Activated CD4-positive, alpha-beta T cell treated with anti-CD3 and anti-CD28 coated beads, Interleukin-2, amount 10 ng/mL, durations not matched to agents 24 days and 14 days (primary cell): ENCODE measurements at regions of chr11 and their contacts with region 1.

Region 1: DNA sequence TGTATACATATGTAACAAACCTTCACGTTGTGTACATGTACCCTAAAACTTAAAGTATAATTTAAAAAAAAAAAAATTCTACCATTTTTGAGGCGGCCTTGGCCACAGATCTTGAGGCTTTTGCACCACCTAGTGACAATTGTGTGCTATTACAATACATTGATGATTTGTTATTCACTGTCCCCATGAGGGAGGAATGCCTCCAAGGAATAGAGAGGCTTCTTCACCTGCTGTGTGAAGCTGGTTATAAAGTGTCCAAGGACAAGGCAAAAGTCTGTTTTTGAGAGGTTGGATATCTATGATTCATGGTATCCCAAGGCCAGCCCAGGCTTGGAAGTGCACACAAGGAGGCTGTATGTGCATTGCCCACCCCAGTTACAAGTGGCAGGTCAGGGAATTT is 30.7 kb downstream of the SLC22A25 start:
- DNase-seq: peak; percentile 68
- H3K4me3 Mint-ChIP-seq: no peak overlapping the region
- H3K27ac Mint-ChIP-seq: no peak overlapping the region
- H3K4me1 Mint-ChIP-seq: no peaks in the 10 kb centered on the region
- H3K27me3 Mint-ChIP-seq: peaks cover 9% of the 10 kb centered on the region

Region 2: DNA sequence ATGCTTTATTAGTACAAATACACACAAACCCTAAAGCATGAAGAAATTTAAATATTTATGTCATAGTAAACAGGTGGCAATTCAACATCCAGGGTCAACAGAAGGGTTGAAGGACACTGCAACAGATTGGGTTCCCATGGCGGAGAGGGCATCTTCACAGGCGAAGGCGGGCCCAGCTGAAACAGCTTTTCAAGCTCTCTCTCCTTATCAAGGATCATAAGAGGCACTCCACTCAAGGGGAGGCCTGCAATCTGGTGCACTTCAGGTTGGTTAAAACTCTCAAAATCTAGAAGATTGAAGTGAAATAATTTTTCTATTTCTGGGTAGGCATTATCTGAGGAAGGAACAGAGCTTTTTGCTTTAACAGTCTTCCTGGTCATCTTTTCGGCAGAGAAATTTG is 180.3 kb before region 1 on chr11:
- intact Hi-C with region 1: loop called (anchors 1 kb)
- DNase-seq: no peak
- H3K4me3 Mint-ChIP-seq: no peak overlapping the region
- H3K27ac Mint-ChIP-seq: no peak overlapping the region
- H3K4me1 Mint-ChIP-seq: peaks cover 2% of the 10 kb centered on the region
- H3K27me3 Mint-ChIP-seq: peaks cover 22% of the 10 kb centered on the region

Region 3: GRCh38 chr11:63508009-63508408 is 295.3 kb after region 1 on chr11:
- intact Hi-C with region 1: no loop called
- DNase-seq: peak; percentile 68
- H3K4me3 Mint-ChIP-seq: no peak overlapping the region
- H3K27ac Mint-ChIP-seq: no peak overlapping the region
- H3K4me1 Mint-ChIP-seq: peaks cover 5% of the 10 kb centered on the region
- H3K27me3 Mint-ChIP-seq: no peaks in the 10 kb centered on the region